Activated CD4-positive, alpha-beta memory T cell treated with anti-CD3 and anti-CD28 coated beads for 36 hours (primary cell): ENCODE measurements at regions of chr12 and their contacts with region 1.

Region 1: DNA sequence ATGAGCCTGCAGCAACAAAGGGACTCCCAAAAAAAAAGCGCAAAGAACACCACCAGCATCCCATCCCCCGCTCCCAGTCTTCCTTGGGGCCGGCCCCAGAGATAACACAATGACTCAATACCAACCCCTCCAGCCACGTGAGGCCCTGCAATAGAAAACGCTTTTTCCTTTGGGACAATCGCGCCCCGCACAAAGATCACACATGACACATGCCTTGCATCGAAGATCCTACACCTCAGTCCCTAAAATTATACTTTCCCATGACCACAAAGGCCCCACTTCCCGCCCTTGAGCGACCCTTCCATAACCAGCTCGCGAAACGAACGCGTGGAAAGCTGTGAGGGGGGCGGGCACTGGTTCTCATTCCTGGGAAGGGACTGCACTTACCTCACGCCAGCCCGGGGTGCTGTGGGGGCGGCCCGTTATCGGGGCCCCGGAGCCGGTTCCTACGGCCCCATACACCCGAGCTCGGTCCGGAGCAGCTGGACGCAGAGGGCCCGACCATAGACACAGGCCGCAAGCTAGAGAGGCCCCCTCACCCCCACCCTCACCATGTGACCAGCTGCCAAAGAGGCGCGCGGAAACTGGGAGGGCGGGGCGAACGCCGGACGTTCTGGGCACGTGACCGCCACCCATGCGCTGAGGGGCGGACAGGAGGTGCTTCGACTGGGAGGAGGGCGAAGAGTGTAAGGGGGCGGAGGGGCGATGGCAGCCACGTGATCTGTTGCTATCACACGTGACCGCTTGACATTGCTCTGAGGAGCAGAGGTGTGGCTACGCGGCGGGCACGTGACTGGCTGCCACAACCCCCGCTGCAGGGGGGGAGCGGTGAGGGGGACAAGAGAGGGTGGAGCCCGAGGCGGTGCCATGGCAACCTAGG is at the start of gene CDK4:
- DNase-seq: peak; percentile 100
- H3K4me3 Mint-ChIP-seq: peak within 1 kb of the TSS; percentile 95
- H3K27ac Mint-ChIP-seq: peak within 1 kb of the TSS; percentile 91
- H3K4me1 Mint-ChIP-seq: peaks cover 54% of the 10 kb centered on the region
- H3K27me3 Mint-ChIP-seq: no peaks in the 10 kb centered on the region
- total RNA-seq, gene CDK4: 181 to 195 TPM

Region 2: DNA sequence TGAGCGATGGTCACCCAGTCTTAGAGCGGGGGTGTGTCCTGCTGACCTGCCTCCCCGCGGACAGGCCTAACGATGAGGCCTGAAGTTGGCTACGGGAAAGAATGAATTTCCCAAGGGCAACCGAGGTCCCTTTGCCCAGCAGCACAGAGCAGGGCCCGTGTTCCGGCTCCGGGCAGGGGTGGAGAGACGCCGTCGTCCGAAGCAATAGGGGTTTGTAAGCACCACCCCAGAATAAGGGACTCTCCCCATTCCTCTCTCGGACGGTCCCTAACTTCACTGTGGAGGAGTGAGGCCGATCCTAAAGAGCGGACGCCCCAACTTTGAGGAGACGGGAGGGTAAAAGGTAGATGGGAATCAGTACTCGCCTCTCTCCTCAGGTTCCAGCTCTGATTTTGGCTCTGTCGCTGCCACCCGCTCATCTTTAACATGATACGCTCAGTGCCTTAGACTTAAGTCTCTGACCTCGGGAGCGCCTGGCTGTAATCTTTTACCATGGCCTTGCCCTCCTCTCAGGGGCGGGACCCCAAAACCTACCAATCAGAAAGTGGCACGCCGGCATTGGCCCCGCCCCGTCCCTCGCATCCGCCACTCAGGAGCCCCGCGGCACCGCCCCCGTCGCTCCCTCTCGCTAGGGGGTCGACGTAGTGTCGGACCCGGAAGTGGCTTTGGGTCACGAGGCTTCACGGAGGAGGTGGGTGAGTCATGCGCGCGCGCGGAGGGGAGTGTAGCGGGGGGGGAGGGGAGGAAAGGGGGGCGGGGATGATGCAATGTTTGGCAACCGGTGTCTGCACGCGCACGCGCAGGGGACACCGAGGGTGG is 231.8 kb before region 1 on chr12 and contains the start of gene DDIT3:
- CTCF ChIA-PET with region 1: no interaction called
- POLR2A ChIA-PET with region 1: no interaction called
- intact Hi-C with region 1: loop called (anchors 1 kb)
- DNase-seq: peak; percentile 100
- H3K4me3 Mint-ChIP-seq: peak within 1 kb of the TSS; percentile 94
- H3K27ac Mint-ChIP-seq: peak within 1 kb of the TSS; percentile 100
- H3K4me1 Mint-ChIP-seq: peaks cover 55% of the 10 kb centered on the region
- H3K27me3 Mint-ChIP-seq: no peaks in the 10 kb centered on the region
- total RNA-seq, gene DDIT3: 24.1 to 25.2 TPM

Region 3: GRCh38 chr12:57765042-57765697 is 13.1 kb after region 1 on chr12:
- CTCF ChIA-PET with region 1: interaction called, 52 read pairs
- POLR2A ChIA-PET with region 1: interaction called, 5 read pairs
- intact Hi-C with region 1: loop called (anchors 1 kb)
- DNase-seq: peak; percentile 79
- H3K4me3 Mint-ChIP-seq: peak overlapping the region; percentile 86
- H3K27ac Mint-ChIP-seq: peak overlapping the region; percentile 77
- H3K4me1 Mint-ChIP-seq: peaks cover 28% of the 10 kb centered on the region
- H3K27me3 Mint-ChIP-seq: peaks cover 2% of the 10 kb centered on the region

Region 4: DNA sequence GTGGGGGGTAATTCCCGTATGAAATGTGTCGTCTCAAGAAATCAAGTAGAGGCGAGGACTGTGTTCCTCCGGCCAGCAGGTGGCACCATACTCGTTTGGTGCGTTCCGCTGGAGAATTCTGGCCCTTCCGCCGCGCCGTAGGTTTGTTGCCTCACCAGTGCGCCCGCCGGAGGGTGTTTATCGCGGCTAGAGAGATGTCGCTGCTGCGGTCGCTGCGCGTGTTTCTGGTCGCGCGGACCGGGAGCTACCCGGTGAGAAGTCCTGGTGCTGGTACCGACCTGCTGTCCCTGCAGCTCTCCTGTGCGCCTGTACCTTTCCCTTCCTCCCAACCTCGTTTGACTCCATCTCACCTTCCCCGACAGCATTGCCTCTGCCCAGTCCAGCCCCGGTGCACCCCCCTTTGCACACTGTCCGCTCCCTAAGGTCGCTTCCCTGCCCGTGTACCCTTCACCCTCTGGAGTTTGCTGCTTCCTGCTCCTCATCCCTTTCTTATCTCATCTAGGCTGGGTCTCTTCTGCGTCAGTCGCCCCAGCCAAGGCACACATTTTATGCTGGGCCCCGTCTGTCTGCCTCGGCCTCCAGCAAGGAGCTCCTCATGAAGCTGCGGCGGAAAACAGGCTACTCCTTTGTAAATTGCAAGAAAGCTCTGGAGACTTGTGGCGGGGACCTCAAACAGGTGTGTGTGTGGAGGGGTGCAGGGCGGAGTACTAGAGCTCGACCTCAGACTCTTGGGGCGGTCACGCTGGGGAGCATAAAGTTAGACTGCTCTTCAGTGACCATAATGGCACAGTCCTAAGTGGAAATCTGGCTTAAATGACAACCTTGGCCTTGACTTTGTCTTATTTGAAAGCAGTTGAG is 30.8 kb after region 1 on chr12 and contains the start of gene TSFM:
- CTCF ChIA-PET with region 1: interaction called, 17 read pairs
- POLR2A ChIA-PET with region 1: interaction called, 3 read pairs
- intact Hi-C with region 1: loop called (anchors 1 kb)
- DNase-seq: peak; percentile 98
- H3K4me3 Mint-ChIP-seq: peak within 1 kb of the TSS; percentile 100
- H3K27ac Mint-ChIP-seq: peak within 1 kb of the TSS; percentile 93
- H3K4me1 Mint-ChIP-seq: peaks cover 37% of the 10 kb centered on the region
- H3K27me3 Mint-ChIP-seq: no peaks in the 10 kb centered on the region
- total RNA-seq, gene TSFM: 45.5 to 47.2 TPM

Region 5: DNA sequence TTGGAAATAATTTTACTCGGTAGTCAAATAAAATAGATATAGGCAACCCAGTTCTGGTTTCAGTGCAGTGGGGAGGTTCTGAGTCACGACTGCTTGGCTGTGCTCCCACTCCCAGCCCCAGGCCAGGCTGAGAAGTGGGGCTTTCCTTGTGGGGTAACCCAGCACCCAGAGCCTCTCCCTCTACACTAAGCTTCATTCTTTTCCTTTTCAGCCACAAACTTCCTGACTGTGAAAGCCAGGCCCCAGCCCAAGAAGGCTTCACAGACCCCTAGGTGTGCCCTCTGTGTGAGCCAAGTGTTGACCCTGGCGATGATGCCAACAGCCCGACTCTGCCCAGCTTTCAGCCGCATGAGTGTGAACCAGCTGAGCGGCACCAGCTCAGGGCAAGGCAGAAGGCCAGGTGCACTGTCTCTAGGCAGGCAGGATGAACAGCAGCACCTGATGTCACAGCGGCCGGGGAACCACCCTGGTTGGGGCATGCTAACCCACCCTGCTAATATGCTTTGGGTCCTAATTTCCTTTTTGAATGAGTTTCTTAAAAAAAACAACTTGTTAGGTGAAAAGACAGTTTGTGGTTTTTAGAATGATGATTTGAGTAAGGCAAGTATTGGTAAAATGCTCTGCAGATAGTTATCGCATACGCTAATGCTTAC is 147.1 kb after region 1 on chr12:
- CTCF ChIA-PET with region 1: interaction called, 20 read pairs
- POLR2A ChIA-PET with region 1: no interaction called
- intact Hi-C with region 1: no loop called
- DNase-seq: peak; percentile 91
- H3K4me3 Mint-ChIP-seq: peak overlapping the region; percentile 66
- H3K27ac Mint-ChIP-seq: peak overlapping the region; percentile 94
- H3K4me1 Mint-ChIP-seq: peaks cover 54% of the 10 kb centered on the region
- H3K27me3 Mint-ChIP-seq: no peaks in the 10 kb centered on the region

Region 6: GRCh38 chr12:59595883-59596540 is 1844.0 kb after region 1 on chr12 and contains the start of gene SLC16A7:
- CTCF ChIA-PET with region 1: no interaction called
- POLR2A ChIA-PET with region 1: no interaction called
- intact Hi-C with region 1: loop called (anchors 2 kb)
- DNase-seq: peak; percentile 89
- H3K4me3 Mint-ChIP-seq: peak within 1 kb of the TSS; percentile 81
- H3K27ac Mint-ChIP-seq: peak within 1 kb of the TSS; percentile 100
- H3K4me1 Mint-ChIP-seq: peaks cover 45% of the 10 kb centered on the region
- H3K27me3 Mint-ChIP-seq: no peaks in the 10 kb centered on the region
- total RNA-seq, gene SLC16A7: 35.8 to 36.6 TPM